ENCODE measurements at regions of chr14 and their contacts with region 1.

Region 1: GRCh38 chr14:59451849-59452248 is 13.3 kb downstream of the GPR135 start:
- DNase-seq: peak; percentile 49
- ATAC-seq: no peak
- H3K4me3 ChIP-seq: no peak overlapping the region
- H3K27ac ChIP-seq: no peak overlapping the region
- H3K4me1 ChIP-seq: peaks cover 10% of the 10 kb centered on the region
- H3K27me3 ChIP-seq: no peaks in the 10 kb centered on the region
- CTCF ChIP-seq: no peak
- POLR2A ChIP-seq: no peak
- RAD21 ChIP-seq: no peak

Region 2: GRCh38 chr14:59159169-59159568 is 292.7 kb before region 1 on chr14:
- CTCF ChIA-PET with region 1: no interaction called
- POLR2A ChIA-PET with region 1: no interaction called
- dilution Hi-C with region 1: no loop called
- in situ Hi-C with region 1: no loop called
- intact Hi-C with region 1: loop called (anchors 1 kb)
- DNase-seq: peak; percentile 65
- ATAC-seq: peak; percentile 62
- H3K4me3 ChIP-seq: no peak overlapping the region
- H3K27ac ChIP-seq: no peak overlapping the region
- H3K4me1 ChIP-seq: peaks cover 5% of the 10 kb centered on the region
- H3K27me3 ChIP-seq: peaks cover 23% of the 10 kb centered on the region
- CTCF ChIP-seq: no peak
- POLR2A ChIP-seq: no peak
- RAD21 ChIP-seq: no peak

Region 3: DNA sequence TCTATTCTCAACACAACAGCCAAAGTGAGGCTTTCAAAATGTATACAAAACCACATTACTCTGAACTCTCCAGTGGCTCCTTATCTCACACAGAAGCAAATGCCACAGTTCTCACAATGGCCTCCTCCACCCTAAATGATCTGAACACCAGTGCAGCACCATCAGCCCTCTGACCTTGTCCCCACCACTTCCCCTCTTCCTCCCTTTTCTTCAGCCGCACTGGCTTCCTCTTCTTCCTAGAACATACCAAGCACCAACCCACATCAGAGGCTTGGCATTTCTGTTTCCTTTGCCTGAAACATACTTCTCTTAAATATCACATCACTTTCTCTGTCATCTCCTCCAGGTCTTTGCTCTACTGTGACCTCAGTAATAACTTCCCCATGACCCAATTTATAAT is 53.0 kb before region 1 on chr14:
- CTCF ChIA-PET with region 1: no interaction called
- POLR2A ChIA-PET with region 1: no interaction called
- dilution Hi-C with region 1: no loop called
- in situ Hi-C with region 1: no loop called
- intact Hi-C with region 1: no loop called
- DNase-seq: no peak
- ATAC-seq: no peak
- H3K4me3 ChIP-seq: no peak overlapping the region
- H3K27ac ChIP-seq: no peak overlapping the region
- H3K4me1 ChIP-seq: no peaks in the 10 kb centered on the region
- H3K27me3 ChIP-seq: no peaks in the 10 kb centered on the region
- CTCF ChIP-seq: no peak
- POLR2A ChIP-seq: no peak
- RAD21 ChIP-seq: no peak

Measured in IMR-90 (cell line).